HepG2 (cell line): ENCODE measurements at regions of chr9 and their contacts with region 1.

Region 1: DNA sequence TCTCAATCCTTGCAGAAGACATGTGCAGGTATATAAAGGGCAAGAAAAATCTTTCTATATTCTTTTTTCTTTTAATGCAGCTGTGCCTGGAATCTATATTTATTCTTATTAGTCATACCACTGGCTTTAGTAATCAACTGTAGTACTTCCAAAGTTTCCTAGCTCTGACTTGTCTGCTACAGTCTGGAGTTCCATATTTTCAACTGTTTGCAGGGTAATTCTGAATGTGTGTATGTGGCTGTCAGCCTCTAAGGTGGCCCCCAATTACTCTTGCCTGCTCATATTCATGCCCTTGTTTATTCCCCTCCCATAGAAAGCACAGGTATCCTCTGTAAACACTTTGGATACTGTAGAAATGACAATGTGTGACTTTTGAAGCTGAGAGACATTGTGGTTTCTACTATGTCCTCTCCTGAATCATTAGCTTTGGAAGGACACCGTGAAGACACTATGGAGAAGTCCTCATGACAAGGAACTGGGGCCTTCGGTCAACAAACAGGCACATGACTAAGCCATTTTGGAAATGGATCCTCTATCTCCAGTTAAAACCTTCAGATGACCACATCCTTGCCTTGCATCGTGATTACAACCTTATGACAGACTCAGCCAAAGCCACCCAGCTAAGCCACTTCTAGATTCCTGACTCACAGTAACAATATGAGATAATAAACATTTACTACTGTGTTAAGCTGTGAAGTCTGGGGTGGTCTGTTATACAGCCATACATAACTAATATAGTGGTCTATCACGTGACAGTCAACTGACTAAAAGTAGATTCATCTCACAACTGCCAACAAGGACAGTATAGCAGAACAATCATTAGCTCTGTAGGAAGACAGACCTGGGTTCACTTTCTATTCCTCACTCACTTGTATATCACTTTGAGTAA is 49.5 kb upstream of the SUSD1 start:
- DNase-seq: no peak
- ATAC-seq: no peak
- H3K4me3 ChIP-seq: no peak overlapping the region
- H3K27ac ChIP-seq: no peak overlapping the region
- H3K4me1 ChIP-seq: no peaks in the 10 kb centered on the region
- H3K27me3 ChIP-seq: no peaks in the 10 kb centered on the region
- CTCF ChIP-seq: no peak
- EP300 ChIP-seq: no peak
- POLR2A ChIP-seq: no peak
- RAD21 ChIP-seq: no peak

Region 2: GRCh38 chr9:112112941-112113681 is 111.5 kb before region 1 on chr9:
- CTCF ChIA-PET with region 1: no interaction called
- POLR2A ChIA-PET with region 1: no interaction called
- in situ Hi-C with region 1: no loop called
- intact Hi-C with region 1: loop called (anchors 5 kb)
- DNase-seq: peak; percentile 60
- ATAC-seq: peak; percentile 88
- H3K4me3 ChIP-seq: no peak overlapping the region
- H3K27ac ChIP-seq: no peak overlapping the region
- H3K4me1 ChIP-seq: peaks cover 48% of the 10 kb centered on the region
- H3K27me3 ChIP-seq: no peaks in the 10 kb centered on the region
- CTCF ChIP-seq: peak; percentile 90
- EP300 ChIP-seq: no peak
- POLR2A ChIP-seq: no peak
- RAD21 ChIP-seq: peak; percentile 89

Region 3: GRCh38 chr9:112852741-112853504 is 628.3 kb after region 1 on chr9:
- CTCF ChIA-PET with region 1: no interaction called
- POLR2A ChIA-PET with region 1: no interaction called
- in situ Hi-C with region 1: no loop called
- intact Hi-C with region 1: no loop called
- DNase-seq: no peak
- ATAC-seq: no peak
- H3K4me3 ChIP-seq: no peak overlapping the region
- H3K27ac ChIP-seq: no peak overlapping the region
- H3K4me1 ChIP-seq: no peaks in the 10 kb centered on the region
- H3K27me3 ChIP-seq: no peaks in the 10 kb centered on the region
- CTCF ChIP-seq: no peak
- EP300 ChIP-seq: no peak
- POLR2A ChIP-seq: no peak
- RAD21 ChIP-seq: no peak